MCF 10A (cell line): ENCODE measurements at regions of chr10 and their contacts with region 1.

Region 1: DNA sequence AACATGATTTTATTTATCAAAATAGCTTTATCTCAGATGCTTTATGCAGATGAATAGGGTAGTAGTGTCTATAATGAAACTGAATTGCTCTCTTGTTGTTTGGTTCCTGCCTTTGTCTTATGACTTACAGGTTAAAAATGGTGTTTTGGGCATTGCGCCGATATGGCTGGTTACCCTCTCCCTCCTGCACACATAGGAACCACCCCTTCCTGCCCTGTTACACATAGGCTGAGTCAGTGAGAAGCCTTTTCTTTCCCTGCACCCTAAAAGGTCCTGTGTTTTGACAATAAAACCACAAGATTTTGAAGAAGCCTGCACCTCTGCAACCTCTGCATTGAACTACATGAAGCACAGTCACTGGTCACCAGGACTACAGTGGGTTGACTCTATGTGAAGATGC is 655.8 kb upstream of the ANKRD30A start:
- DNase-seq: peak; percentile 83
- H3K4me3 Mint-ChIP-seq: peak overlapping the region; percentile 36
- H3K27ac Mint-ChIP-seq: peak overlapping the region; percentile 85
- H3K4me1 Mint-ChIP-seq: peaks cover 31% of the 10 kb centered on the region
- H3K27me3 Mint-ChIP-seq: no peaks in the 10 kb centered on the region
- CTCF ChIP-seq: no peak

Region 2: GRCh38 chr10:36494371-36494770 is 24.8 kb after region 1 on chr10:
- CTCF ChIA-PET with region 1: no interaction called
- POLR2A ChIA-PET with region 1: interaction called, 14 read pairs
- intact Hi-C with region 1: loop called (anchors 1 kb)
- DNase-seq: peak; percentile 67
- H3K4me3 Mint-ChIP-seq: no peak overlapping the region
- H3K27ac Mint-ChIP-seq: peak overlapping the region; percentile 87
- H3K4me1 Mint-ChIP-seq: peaks cover 44% of the 10 kb centered on the region
- H3K27me3 Mint-ChIP-seq: no peaks in the 10 kb centered on the region
- CTCF ChIP-seq: no peak